Activated CD8-positive, alpha-beta T cell treated with anti-CD3 and anti-CD28 coated beads, Interleukin-2, amount 10 ng/mL, durations not matched to agents 7 days and 5 days (primary cell): ENCODE measurements at regions of chr19 and their contacts with region 1.

Region 1: GRCh38 chr19:8252922-8253589 is 43.9 kb downstream of the CERS4 start:
- DNase-seq: peak; percentile 88
- ATAC-seq: peak; percentile 92
- H3K4me3 Mint-ChIP-seq: no peak overlapping the region
- H3K27ac Mint-ChIP-seq: no peak overlapping the region
- H3K4me1 Mint-ChIP-seq: peaks cover 7% of the 10 kb centered on the region
- H3K27me3 Mint-ChIP-seq: no peaks in the 10 kb centered on the region

Region 2: GRCh38 chr19:8158411-8159074 is 94.5 kb before region 1 on chr19:
- CTCF ChIA-PET with region 1: interaction called, 11 read pairs
- POLR2A ChIA-PET with region 1: interaction called, 3 read pairs
- DNase-seq: peak; percentile 73
- ATAC-seq: peak; percentile 72
- H3K4me3 Mint-ChIP-seq: no peak overlapping the region
- H3K27ac Mint-ChIP-seq: no peak overlapping the region
- H3K4me1 Mint-ChIP-seq: peaks cover 8% of the 10 kb centered on the region
- H3K27me3 Mint-ChIP-seq: peaks cover 13% of the 10 kb centered on the region